GM12878 (cell line): ENCODE measurements at regions of chr4 and their contacts with region 1.

Region 1: DNA sequence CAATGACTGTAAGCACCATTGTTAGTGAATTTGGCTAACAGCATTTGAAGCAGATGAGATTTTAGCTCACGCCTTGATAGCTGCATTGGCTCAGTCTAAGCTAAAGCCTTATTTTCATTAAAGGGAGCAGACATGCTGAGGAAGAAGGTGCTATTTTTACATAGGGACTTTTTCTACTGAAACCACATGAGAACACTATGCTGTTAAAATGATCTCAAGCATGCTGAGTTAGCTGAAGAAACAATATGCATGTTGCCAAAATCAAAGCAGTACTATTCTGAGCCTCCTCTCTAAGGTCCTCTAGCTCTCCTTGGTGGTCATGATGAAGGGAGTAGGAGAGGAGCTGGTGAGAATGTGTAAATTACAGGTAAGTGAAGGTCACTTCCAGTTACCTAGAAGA is 134.4 kb upstream of the JADE1 start:
- DNase-seq: peak; percentile 90
- ATAC-seq: peak; percentile 97
- H3K4me3 ChIP-seq: no peak overlapping the region; the same call in 1 of the 2 replicates
- H3K27ac ChIP-seq: peak overlapping the region; percentile 69
- H3K4me1 ChIP-seq: peaks cover 9% of the 10 kb centered on the region
- H3K27me3 ChIP-seq: no peaks in the 10 kb centered on the region
- CTCF ChIP-seq: peak in 1 of 3 experiments; percentile 60; a peak in 3 of 6 replicates
- EP300 ChIP-seq: peak in 1 of 2 experiments; percentile 74; a peak in 2 of 4 replicates
- POLR2A ChIP-seq: no peak
- RAD21 ChIP-seq: peak; percentile 90

Region 2: GRCh38 chr4:128633067-128633466 is 42.0 kb before region 1 on chr4:
- CTCF ChIA-PET with region 1: interaction called, 9 read pairs
- POLR2A ChIA-PET with region 1: interaction called, 4 read pairs
- RAD21 ChIA-PET with region 1: no interaction called
- SMC1A ChIA-PET with region 1: interaction called, 11 read pairs
- in situ Hi-C with region 1: no loop called
- intact Hi-C with region 1: no loop called
- DNase-seq: no peak
- ATAC-seq: peak; percentile 72
- H3K4me3 ChIP-seq: no peak overlapping the region
- H3K27ac ChIP-seq: no peak overlapping the region
- H3K4me1 ChIP-seq: no peaks in the 10 kb centered on the region
- H3K27me3 ChIP-seq: no peaks in the 10 kb centered on the region
- CTCF ChIP-seq: no peak
- EP300 ChIP-seq: no peak
- POLR2A ChIP-seq: no peak
- RAD21 ChIP-seq: no peak

Region 3: DNA sequence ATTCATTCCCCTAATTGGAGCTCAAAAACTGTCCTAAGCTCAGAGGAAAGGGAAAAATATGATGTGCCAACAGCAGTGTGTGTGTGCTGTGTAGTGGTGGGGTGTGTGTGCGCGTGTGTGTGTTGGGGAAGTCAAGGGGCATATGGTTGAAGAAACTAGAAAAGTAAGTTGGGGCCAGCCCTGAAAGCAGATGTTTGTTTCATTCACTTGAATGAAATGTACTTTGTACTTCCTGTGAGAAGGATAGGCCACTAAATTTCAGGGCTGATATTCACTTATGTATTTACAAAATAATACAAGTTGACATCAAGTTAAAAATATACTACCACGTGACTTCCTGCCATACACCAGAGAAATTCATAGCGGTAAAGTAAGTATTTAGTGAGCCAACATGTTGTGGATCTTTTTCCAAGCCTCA is 16.9 kb before region 1 on chr4:
- CTCF ChIA-PET with region 1: interaction called, 4 read pairs
- POLR2A ChIA-PET with region 1: interaction called, 9 read pairs
- RAD21 ChIA-PET with region 1: interaction called, 8 read pairs
- SMC1A ChIA-PET with region 1: interaction called, 22 read pairs
- in situ Hi-C with region 1: no loop called
- intact Hi-C with region 1: no loop called
- DNase-seq: peak; percentile 11
- ATAC-seq: peak; percentile 62
- H3K4me3 ChIP-seq: no peak overlapping the region
- H3K27ac ChIP-seq: no peak overlapping the region
- H3K4me1 ChIP-seq: peaks cover 4% of the 10 kb centered on the region; the same call in 1 of the 2 replicates
- H3K27me3 ChIP-seq: no peaks in the 10 kb centered on the region
- CTCF ChIP-seq: no peak
- EP300 ChIP-seq: peak in 1 of 2 experiments; percentile 23; a peak in 1 of 4 replicates
- POLR2A ChIP-seq: no peak
- RAD21 ChIP-seq: no peak

Region 4: DNA sequence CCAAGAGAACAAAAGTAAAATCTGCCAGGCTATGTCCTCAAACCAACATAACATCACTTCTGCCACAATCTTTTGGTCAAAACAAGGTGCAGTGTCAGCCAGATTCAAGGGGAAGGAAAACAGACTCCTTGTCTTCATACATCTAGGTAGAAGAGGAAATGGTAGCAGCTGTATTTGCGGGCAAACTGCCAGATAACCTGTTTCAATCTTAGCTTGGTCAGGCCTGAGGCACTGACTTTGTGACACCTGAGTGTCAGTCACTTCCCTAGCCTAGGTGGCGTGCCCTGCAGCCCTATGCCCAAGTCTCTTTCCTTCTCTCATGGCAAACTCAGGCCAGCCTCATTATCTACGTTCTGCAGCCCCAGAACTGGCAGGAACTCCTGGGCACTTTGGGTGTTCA is 11.7 kb before region 1 on chr4:
- CTCF ChIA-PET with region 1: interaction called, 3 read pairs
- POLR2A ChIA-PET with region 1: interaction called, 9 read pairs
- RAD21 ChIA-PET with region 1: interaction called, 6 read pairs
- SMC1A ChIA-PET with region 1: interaction called, 22 read pairs
- in situ Hi-C with region 1: no loop called
- intact Hi-C with region 1: no loop called
- DNase-seq: peak; percentile 37
- ATAC-seq: peak; percentile 81
- H3K4me3 ChIP-seq: no peak overlapping the region
- H3K27ac ChIP-seq: no peak overlapping the region
- H3K4me1 ChIP-seq: peaks cover 2% of the 10 kb centered on the region; the same call in 1 of the 2 replicates
- H3K27me3 ChIP-seq: no peaks in the 10 kb centered on the region
- CTCF ChIP-seq: no peak
- EP300 ChIP-seq: no peak
- POLR2A ChIP-seq: no peak
- RAD21 ChIP-seq: no peak